ENCODE measurements at regions of chr19 and their contacts with region 1.

Region 1: DNA sequence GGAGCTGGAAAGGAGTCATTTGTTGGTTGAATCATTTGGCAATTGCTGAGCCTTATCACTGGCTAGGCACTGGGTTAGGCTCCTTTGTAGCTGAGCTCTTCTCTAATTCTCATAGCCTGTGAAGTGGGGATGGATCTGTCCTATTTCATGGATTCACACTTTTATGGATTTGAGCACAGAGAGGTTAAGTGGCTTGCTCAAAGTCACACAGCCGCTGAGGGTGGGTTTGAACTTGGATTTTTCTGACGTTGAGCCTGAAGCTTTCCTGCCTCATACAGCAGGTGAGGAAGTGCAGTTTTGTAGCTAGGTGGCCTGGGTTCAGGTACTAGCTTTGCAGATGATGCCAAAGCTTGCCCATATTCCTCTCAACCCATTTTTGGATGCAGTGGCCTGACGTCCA is 19.4 kb downstream of the CYP4F22 start:
- DNase-seq: no peak
- H3K4me3 ChIP-seq: no peak overlapping the region
- H3K27ac ChIP-seq: no peak overlapping the region
- H3K4me1 ChIP-seq: no peaks in the 10 kb centered on the region
- H3K27me3 ChIP-seq: peaks cover 0 to 36% of the 10 kb centered on the region in 2 donors
- CTCF ChIP-seq: no peak

Region 2: GRCh38 chr19:15498911-15499317 is 28.8 kb before region 1 on chr19:
- intact Hi-C with region 1: loop called (anchors 1 kb)
- DNase-seq: no peak
- H3K4me3 ChIP-seq: no peak overlapping the region
- H3K27ac ChIP-seq: no peak overlapping the region
- H3K4me1 ChIP-seq: no peaks in the 10 kb centered on the region
- H3K27me3 ChIP-seq: peaks cover 0 to 29% of the 10 kb centered on the region in 2 donors
- CTCF ChIP-seq: no peak